HEK293 (cell line): ENCODE measurements at regions of chr13 and their contacts with region 1.

Region 1: GRCh38 chr13:94660695-94661326 is 51.5 kb downstream of the SOX21 start:
- H3K4me3 ChIP-seq: no peak overlapping the region
- H3K27ac ChIP-seq: no peak overlapping the region
- H3K4me1 ChIP-seq: no peaks in the 10 kb centered on the region
- CTCF ChIP-seq: no peak

Region 2: GRCh38 chr13:94674609-94675348 is 14.0 kb after region 1 on chr13:
- CTCF ChIA-PET with region 1: interaction called, 32 read pairs
- POLR2A ChIA-PET with region 1: no interaction called
- H3K4me3 ChIP-seq: no peak overlapping the region
- H3K27ac ChIP-seq: no peak overlapping the region
- H3K4me1 ChIP-seq: no peaks in the 10 kb centered on the region
- CTCF ChIP-seq: no peak

Region 3: GRCh38 chr13:95156208-95156607 is 495.4 kb after region 1 on chr13:
- CTCF ChIA-PET with region 1: interaction called, 10 read pairs
- POLR2A ChIA-PET with region 1: no interaction called
- H3K4me3 ChIP-seq: no peak overlapping the region
- H3K27ac ChIP-seq: no peak overlapping the region
- H3K4me1 ChIP-seq: peaks cover 8% of the 10 kb centered on the region
- CTCF ChIP-seq: no peak

Region 4: DNA sequence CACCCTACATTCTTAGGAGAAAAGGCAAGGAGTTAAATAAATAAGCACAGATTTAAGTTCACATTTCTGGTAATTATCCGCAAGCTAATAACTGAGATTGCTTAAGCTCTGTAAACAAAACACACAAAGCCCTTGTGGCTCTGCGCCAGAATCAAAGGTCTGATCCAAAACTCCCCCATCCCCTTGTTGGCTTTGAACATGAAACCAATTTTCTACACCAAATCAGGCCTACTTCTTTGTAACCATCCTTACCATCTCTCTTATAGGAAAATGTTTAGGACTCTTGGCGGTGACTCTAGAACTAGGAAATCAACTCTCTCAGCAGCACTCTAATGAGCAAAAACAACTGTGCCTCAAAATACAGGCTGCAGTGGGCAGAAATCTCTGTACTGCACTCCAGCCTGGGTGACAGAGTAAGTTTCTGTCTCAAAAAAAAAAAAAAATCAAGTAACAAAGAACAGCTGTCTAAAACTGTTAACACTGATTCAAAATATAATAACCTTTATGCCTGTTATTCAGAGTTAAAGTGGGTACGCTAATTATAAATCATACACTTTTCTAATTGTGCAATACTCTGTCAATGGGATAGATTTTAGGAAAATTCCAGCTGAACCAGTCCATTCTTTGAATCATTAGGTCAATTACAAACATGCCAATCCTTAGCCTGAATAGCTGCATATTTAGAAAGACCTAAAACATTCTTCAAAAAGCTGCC is 614.7 kb after region 1 on chr13:
- CTCF ChIA-PET with region 1: no interaction called
- POLR2A ChIA-PET with region 1: no interaction called
- H3K4me3 ChIP-seq: no peak overlapping the region
- H3K27ac ChIP-seq: no peak overlapping the region
- H3K4me1 ChIP-seq: peaks cover 4% of the 10 kb centered on the region
- CTCF ChIP-seq: no peak